ENCODE measurements at regions of chr3 and their contacts with region 1.

Region 1: GRCh38 chr3:128497387-128498126 is 4.6 kb upstream of the GATA2 start:
- DNase-seq: peak; percentile 67
- H3K4me3 ChIP-seq: peak overlapping the region; percentile 26 to 61 (median 52)
- H3K27ac ChIP-seq: no peak overlapping the region
- H3K4me1 ChIP-seq: peaks cover 0 to 26% (median 26%) of the 10 kb centered on the region in 4 donors
- H3K27me3 ChIP-seq: peaks cover 38 to 100% (median 77%) of the 10 kb centered on the region in 3 donors
- CTCF ChIP-seq: peak in 3 of 4 experiments; percentile 26 to 84 (median 51)
- EP300 ChIP-seq: no peak
- POLR2A ChIP-seq: no peak

Region 2: DNA sequence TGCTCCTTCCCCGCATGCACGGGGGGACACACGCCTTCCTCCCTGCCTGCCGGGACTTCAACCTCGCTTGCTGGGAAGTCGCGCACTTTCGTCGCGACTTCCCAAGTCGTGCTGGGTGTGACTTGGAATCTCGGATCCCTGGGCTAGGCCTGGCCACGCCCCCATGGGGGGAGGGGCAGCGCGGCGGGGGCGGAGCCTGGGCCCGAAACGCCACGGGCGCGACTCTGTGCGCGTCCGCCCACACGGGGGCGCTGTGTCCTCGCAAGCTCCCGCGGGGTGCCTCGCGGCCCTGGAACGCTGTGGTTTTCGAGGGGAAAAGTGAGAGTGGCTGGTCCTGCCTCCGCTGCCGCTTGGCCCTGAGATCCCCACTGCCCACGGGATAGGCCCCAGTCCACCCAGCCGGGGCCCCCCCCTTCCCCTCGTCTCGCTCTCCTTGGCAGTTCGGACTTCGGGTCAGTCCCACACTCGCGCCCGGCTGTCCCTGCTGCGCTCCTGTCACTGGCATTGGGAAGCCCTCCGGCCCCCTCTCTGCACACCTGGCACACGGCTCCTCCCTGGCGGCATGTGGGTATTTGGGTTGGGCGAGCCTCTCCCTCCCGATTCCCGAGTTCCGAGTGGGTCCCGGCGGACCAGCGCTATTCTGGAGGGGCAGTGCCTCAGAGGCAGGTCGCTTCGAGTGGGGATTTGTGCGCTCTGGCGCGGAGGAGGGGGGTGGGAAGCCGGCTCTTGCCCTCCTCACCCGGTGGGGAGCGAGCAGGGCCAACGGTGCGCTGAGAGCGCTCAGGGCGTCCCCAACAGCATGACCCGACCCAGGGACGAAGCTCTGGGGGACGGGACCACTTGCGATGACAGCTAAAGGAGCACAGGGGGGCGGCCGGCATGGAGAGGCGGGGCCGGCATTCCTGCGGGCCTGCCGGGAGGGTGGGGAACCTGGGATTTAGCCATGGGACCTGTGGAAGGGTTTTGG is 421.8 kb before region 1 on chr3:
- intact Hi-C with region 1: loop called (anchors 5 kb)
- DNase-seq: peak; percentile 90
- H3K4me3 ChIP-seq: peak overlapping the region; percentile 22 to 56 (median 53)
- H3K27ac ChIP-seq: peak overlapping the region; percentile 7 to 62 (median 36)
- H3K4me1 ChIP-seq: peaks cover 0 to 28% (median 23%) of the 10 kb centered on the region in 4 donors
- H3K27me3 ChIP-seq: peaks cover 0 to 4% (median 0%) of the 10 kb centered on the region in 3 donors
- CTCF ChIP-seq: peak; percentile 54 to 98 (median 82)
- EP300 ChIP-seq: no peak
- POLR2A ChIP-seq: no peak

Region 3: GRCh38 chr3:128095222-128095703 is 402.3 kb before region 1 on chr3:
- intact Hi-C with region 1: loop called (anchors 2 kb)
- DNase-seq: peak; percentile 86
- H3K4me3 ChIP-seq: no peak overlapping the region
- H3K27ac ChIP-seq: peak overlapping the region in 1 of 4 donors; percentile 38
- H3K4me1 ChIP-seq: peaks cover 0 to 8% (median 4%) of the 10 kb centered on the region in 4 donors
- H3K27me3 ChIP-seq: no peaks in the 10 kb centered on the region
- CTCF ChIP-seq: peak; percentile 60 to 80 (median 72)
- EP300 ChIP-seq: no peak
- POLR2A ChIP-seq: no peak

Region 4: DNA sequence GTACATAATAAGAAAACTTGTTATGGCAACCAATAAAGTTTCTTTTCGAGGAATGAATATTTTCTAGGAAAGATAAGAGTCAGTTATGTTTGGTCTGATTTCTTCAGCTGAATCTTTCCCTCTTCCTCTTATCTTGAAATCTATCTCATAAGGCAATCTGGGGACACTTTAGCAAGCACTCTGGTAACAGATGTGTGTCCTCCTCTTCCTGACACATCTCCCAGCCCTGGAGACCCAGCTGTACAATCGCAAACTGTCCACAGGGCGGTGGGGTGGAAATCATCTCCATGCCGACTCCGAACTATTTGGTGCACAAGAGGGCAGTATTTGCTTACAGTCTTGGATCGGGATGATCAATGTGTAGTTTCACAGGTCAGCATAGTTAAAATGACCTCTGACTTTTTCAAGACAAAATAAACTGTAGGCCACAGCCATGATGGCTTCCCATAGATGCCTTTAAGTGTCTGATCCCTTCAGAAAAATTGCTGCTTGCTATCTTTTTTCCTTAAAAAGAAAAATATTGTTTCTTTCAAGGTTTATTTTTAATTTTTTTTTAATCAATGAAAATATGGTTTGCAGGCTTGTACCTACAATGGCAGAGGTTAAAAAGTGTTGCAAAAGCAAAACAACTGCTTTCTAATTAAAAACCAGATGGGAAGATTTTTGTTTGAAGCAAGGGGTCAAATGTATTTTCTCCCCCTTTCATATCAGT is 326.6 kb before region 1 on chr3:
- intact Hi-C with region 1: loop called (anchors 2 kb)
- DNase-seq: peak; percentile 85
- H3K4me3 ChIP-seq: no peak overlapping the region
- H3K27ac ChIP-seq: no peak overlapping the region
- H3K4me1 ChIP-seq: peaks cover 0 to 18% (median 0%) of the 10 kb centered on the region in 4 donors
- H3K27me3 ChIP-seq: no peaks in the 10 kb centered on the region
- CTCF ChIP-seq: peak; percentile 57 to 83 (median 68)
- EP300 ChIP-seq: no peak
- POLR2A ChIP-seq: no peak

Region 5: DNA sequence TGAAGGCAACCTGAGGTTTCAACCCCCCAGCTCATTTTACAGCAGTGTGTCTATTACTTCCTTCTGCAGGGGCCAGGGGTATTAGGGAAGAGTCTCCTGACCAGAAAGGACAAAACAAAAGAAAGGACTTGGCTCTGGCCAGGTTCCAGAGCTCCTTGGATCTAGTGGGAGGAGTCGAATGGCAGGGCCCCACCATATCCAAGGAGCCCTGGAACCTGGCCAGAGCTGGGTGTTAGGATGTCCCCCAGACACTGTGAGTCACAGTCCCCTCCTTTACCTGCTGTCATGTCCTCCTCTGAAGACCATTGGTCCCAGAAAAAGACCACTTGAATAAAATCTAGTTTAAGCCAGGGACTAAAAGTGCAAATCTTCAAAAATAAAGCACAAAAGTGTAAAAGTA is 231.1 kb before region 1 on chr3:
- intact Hi-C with region 1: no loop called
- DNase-seq: no peak
- H3K4me3 ChIP-seq: no peak overlapping the region
- H3K27ac ChIP-seq: no peak overlapping the region
- H3K4me1 ChIP-seq: peaks cover 0 to 4% (median 0%) of the 10 kb centered on the region in 4 donors
- H3K27me3 ChIP-seq: no peaks in the 10 kb centered on the region
- CTCF ChIP-seq: no peak
- EP300 ChIP-seq: no peak
- POLR2A ChIP-seq: no peak

Region 6: GRCh38 chr3:128426128-128426921 is 71.2 kb before region 1 on chr3:
- intact Hi-C with region 1: loop called (anchors 1 kb)
- DNase-seq: no peak
- H3K4me3 ChIP-seq: peak overlapping the region in 2 of 4 donors; percentile 28 to 32
- H3K27ac ChIP-seq: no peak overlapping the region
- H3K4me1 ChIP-seq: peaks cover 0 to 9% (median 7%) of the 10 kb centered on the region in 4 donors
- H3K27me3 ChIP-seq: peaks cover 0 to 53% (median 34%) of the 10 kb centered on the region in 3 donors
- CTCF ChIP-seq: peak; percentile 36 to 94 (median 54)
- EP300 ChIP-seq: no peak
- POLR2A ChIP-seq: no peak

Region 7: DNA sequence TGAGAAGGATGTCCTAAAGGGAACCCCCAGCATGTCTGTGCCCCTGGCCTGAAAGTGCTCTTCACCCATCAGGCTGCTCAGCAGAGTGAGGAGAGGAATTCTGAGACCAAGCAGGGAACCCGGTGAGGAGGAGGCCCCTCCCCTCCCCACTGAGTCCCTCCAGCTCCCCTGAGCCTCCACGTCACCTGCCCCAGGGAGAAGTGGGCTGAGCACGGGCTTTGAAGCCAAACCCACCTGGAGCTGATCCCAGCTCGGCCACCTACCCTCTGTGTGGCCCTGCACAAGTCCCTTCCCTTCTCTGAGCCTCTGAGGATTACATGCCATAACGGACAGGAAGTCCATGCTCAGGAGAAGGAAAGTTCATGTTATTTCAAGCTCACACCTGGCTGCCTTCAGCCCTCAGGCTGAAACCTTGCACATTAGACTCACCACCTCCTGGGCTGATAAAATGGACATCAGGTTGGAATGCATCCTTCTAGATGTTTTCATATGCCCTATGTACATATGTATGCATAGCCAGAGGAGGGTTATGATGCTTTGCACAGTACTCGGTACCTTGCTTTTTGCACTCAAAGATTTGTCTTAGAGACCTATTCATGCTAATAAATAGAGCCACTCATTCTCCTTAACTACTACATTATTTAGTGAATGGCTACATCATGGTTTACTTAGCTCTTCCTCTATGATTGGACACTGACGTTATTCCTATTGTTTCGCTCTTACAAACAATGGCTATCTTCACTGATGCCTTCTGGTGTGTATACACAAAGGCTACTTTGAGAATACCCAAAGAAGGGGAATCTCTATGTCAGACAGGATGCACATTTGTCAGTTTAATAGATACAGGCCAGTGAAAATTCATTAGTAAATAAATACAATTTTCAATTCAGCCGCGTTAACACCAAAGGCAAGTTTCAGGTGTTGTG is 27.1 kb after region 1 on chr3:
- intact Hi-C with region 1: no loop called
- DNase-seq: no peak
- H3K4me3 ChIP-seq: no peak overlapping the region
- H3K27ac ChIP-seq: no peak overlapping the region
- H3K4me1 ChIP-seq: no peaks in the 10 kb centered on the region
- H3K27me3 ChIP-seq: peaks cover 0 to 37% (median 0%) of the 10 kb centered on the region in 3 donors
- CTCF ChIP-seq: no peak
- EP300 ChIP-seq: no peak
- POLR2A ChIP-seq: no peak

Region 8: GRCh38 chr3:128607710-128608048 is 110.1 kb after region 1 on chr3:
- intact Hi-C with region 1: loop called (anchors 5 kb)
- DNase-seq: no peak
- H3K4me3 ChIP-seq: peak overlapping the region; percentile 38 to 58 (median 49)
- H3K27ac ChIP-seq: peak overlapping the region; percentile 57 to 81 (median 69)
- H3K4me1 ChIP-seq: peaks cover 0 to 12% (median 8%) of the 10 kb centered on the region in 4 donors
- H3K27me3 ChIP-seq: no peaks in the 10 kb centered on the region
- CTCF ChIP-seq: no peak
- EP300 ChIP-seq: no peak
- POLR2A ChIP-seq: no peak

Measured in sigmoid colon (tissue), 7 donors.